ENCODE measurements at regions of chr1 and their contacts with region 1.

Region 1: GRCh38 chr1:43317817-43318471 is 17.2 kb downstream of the TIE1 start:
- DNase-seq: peak; percentile 62 to 86 (median 80)
- H3K4me3 ChIP-seq: no peak overlapping the region
- H3K27ac ChIP-seq: peak overlapping the region in 57 of 59 donors; percentile 10 to 96 (median 79)
- H3K27me3 ChIP-seq: no peaks in the 10 kb centered on the region
- CTCF ChIP-seq: peak in 1 of 56 donors; percentile 16

Region 2: GRCh38 chr1:43293896-43294760 is 23.8 kb before region 1 on chr1:
- intact Hi-C with region 1: loop called in 1 of 2 experiments (anchors 2 kb)
- DNase-seq: peak in 8 of 10 donors; percentile 56 to 82 (median 68)
- H3K4me3 ChIP-seq: peak overlapping the region in 5 of 59 donors; percentile 4 to 21 (median 9)
- H3K27ac ChIP-seq: peak overlapping the region; percentile 84 to 100 (median 97)
- H3K27me3 ChIP-seq: no peaks in the 10 kb centered on the region
- CTCF ChIP-seq: no peak

Region 3: DNA sequence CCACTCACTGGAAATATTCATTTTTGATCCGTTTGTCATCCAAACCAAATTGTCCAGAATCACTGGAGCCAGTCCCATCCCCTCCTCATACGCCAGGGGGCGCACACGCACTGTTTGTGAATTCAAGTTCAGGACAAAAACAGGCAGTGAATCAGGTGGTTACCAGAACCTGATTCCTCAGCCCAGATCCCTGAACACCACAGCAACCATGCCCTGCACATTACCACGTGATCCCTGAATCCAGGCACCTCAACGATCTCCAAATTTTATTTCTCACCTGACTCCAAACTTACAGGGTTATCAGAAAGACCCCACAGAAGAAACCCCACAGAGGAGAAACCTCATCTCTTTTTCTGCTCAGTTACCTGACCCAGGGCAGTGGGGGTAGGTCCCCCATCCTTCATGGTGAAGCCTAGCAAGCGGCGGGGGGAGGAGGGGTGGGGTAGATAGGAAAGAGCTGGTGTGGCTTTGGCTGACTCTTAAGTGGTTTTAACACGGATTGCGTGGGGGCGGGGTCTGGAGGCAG is 211.3 kb after region 1 on chr1:
- intact Hi-C with region 1: no loop called
- DNase-seq: peak; percentile 42 to 90 (median 84)
- H3K4me3 ChIP-seq: peak overlapping the region in 2 of 59 donors; percentile 3 to 16
- H3K27ac ChIP-seq: peak overlapping the region in 20 of 59 donors; percentile 7 to 97 (median 82)
- H3K27me3 ChIP-seq: no peaks in the 10 kb centered on the region
- CTCF ChIP-seq: peak; percentile 88 to 99 (median 97)